GM12878 (cell line): ENCODE measurements at regions of chrX and their contacts with region 1.

Region 1: DNA sequence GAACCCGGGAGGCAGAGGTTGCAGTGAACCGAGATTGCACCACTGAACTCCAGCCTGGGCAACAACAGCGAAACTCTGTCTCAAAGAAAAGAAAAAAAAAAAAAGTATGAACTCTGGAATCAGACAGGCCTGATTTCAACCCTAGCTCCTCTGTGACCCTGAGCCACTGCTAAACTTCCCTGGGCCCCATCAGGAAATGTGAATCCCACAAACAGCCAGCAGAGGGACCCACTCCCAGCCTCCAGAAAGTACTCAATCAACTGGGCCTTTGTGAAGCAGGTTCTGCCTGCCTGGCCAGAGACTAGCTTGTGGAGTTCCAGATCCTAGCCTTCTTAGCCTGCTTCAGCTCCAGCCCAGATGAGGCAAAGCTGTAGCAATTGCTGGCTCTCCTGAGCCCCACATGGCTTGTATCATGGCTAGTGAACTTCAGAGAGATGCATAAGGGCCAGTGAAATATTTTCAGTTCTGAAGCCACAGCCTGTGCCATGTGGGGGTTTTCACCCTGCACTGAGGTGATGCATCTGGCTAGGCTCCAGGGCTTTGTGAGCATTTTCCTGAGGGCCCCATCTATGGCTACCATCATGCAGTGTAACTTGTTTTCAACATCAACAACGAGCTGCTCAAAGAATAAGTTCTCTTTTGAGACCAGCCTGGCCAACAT is 7.2 kb upstream of the IDS start:
- DNase-seq: peak; percentile 13
- ATAC-seq: peak; percentile 92
- H3K4me3 ChIP-seq: no peak overlapping the region
- H3K27ac ChIP-seq: peak overlapping the region; percentile 50; the same call in 1 of the 2 replicates
- H3K4me1 ChIP-seq: peaks cover 7% of the 10 kb centered on the region
- H3K27me3 ChIP-seq: no peaks in the 10 kb centered on the region; a peak in 2 of 4 replicates
- CTCF ChIP-seq: peak; percentile 61 to 72 (median 70)
- EP300 ChIP-seq: no peak
- POLR2A ChIP-seq: no peak
- RAD21 ChIP-seq: peak; percentile 61

Region 2: DNA sequence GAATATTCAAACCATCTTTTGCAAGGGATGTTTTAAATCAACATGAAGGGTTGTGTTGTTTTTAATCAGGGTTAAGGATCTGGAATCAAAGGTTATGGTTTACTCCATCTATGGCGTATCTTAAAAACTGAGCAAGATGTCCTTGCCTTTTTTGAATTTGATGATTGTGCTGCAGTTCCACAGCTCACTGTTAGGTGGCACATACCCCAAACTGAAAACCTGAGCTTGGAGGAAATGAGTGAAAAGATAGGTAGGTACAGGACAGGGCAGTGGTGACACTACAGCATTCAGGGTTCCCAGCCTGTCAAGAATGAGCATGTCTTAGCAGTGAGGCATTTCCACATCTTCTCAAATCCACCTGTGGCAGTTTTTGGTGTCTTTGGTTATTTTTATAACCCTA is 15.3 kb after region 1 on chrX:
- CTCF ChIA-PET with region 1: interaction called, 88 read pairs
- POLR2A ChIA-PET with region 1: interaction called, 3 read pairs
- RAD21 ChIA-PET with region 1: interaction called, 11 read pairs
- SMC1A ChIA-PET with region 1: interaction called, 20 read pairs
- in situ Hi-C with region 1: no loop called
- intact Hi-C with region 1: no loop called
- DNase-seq: no peak
- ATAC-seq: peak; percentile 43
- H3K4me3 ChIP-seq: no peak overlapping the region
- H3K27ac ChIP-seq: no peak overlapping the region
- H3K4me1 ChIP-seq: peaks cover 18% of the 10 kb centered on the region
- H3K27me3 ChIP-seq: no peaks in the 10 kb centered on the region
- CTCF ChIP-seq: peak; percentile 53 to 63 (median 62); a peak in 5 of 6 replicates
- EP300 ChIP-seq: no peak
- POLR2A ChIP-seq: no peak
- RAD21 ChIP-seq: peak; percentile 62

Region 3: DNA sequence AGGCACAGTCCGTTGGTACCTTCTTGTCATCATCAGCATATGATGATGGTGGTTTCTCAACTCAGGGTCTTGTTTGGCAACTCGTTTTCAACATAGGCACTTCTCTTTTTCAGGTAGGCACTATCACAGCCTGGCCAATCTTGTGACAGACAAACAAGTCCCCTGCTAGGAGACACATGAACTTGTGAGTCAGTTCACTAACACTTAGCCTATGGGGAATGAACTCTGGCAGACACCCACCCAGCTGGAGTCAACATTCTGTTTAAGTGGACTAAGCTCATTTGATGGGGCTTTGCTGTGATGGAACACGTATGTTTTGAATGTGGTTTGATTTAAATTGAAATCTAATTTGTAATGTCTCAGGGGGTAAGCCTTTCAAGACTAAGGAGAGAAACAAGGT is 750.1 kb after region 1 on chrX:
- CTCF ChIA-PET with region 1: no interaction called
- POLR2A ChIA-PET with region 1: no interaction called
- RAD21 ChIA-PET with region 1: no interaction called
- SMC1A ChIA-PET with region 1: no interaction called
- in situ Hi-C with region 1: no loop called
- intact Hi-C with region 1: no loop called
- DNase-seq: no peak
- ATAC-seq: no peak
- H3K4me3 ChIP-seq: no peak overlapping the region
- H3K27ac ChIP-seq: no peak overlapping the region
- H3K4me1 ChIP-seq: no peaks in the 10 kb centered on the region
- H3K27me3 ChIP-seq: peaks cover 0 to 4% of the 10 kb centered on the region in 2 experiments; a peak in 2 of 4 replicates
- CTCF ChIP-seq: no peak
- EP300 ChIP-seq: no peak
- POLR2A ChIP-seq: no peak
- RAD21 ChIP-seq: no peak